Right ventricle myocardium inferior (tissue), 1 donor: ENCODE measurements at regions of chr10 and their contacts with region 1.

Region 1: DNA sequence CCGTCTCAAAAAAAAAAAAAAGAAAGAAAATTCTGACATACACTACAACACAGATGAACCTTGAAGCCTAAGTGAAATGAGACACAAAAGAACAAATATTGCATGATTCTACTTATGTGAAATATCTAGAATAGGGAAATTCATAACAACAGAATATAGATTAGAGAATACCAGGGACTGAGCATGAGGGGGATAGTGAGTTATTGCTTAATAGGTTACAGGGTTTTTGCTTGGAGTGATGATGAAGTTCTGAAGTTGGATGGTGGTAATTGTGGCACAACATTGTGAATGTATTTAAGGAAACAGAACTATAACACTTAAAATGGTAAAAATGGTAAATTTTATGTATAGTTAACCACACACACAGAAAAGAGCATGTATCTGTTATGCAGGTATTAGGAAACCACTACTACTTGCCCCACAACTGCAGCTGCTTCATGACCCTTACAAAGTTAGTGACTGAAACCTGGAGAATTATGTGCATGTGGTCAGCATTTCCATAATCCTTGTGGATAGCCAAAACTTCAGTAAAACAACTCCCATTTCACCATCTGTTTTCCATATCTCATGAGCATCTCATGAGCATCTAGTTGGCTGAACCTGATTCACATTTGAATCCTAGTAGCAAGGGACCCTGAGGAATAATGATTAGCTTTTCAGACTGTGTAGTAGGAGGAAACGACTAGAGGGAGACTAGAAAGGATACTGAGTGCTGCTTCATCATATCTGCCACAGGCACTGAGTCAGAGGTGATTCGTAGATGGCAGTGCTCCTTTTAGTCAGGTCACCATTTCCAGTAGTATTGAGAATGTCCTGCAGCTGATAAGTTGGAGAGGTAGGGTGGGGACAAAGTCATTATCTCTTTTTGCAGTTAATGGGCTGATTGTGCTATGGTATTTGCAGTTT is 26.3 kb downstream of the SAMD8 start:
- DNase-seq: no peak
- ATAC-seq: peak; percentile 44

Region 2: DNA sequence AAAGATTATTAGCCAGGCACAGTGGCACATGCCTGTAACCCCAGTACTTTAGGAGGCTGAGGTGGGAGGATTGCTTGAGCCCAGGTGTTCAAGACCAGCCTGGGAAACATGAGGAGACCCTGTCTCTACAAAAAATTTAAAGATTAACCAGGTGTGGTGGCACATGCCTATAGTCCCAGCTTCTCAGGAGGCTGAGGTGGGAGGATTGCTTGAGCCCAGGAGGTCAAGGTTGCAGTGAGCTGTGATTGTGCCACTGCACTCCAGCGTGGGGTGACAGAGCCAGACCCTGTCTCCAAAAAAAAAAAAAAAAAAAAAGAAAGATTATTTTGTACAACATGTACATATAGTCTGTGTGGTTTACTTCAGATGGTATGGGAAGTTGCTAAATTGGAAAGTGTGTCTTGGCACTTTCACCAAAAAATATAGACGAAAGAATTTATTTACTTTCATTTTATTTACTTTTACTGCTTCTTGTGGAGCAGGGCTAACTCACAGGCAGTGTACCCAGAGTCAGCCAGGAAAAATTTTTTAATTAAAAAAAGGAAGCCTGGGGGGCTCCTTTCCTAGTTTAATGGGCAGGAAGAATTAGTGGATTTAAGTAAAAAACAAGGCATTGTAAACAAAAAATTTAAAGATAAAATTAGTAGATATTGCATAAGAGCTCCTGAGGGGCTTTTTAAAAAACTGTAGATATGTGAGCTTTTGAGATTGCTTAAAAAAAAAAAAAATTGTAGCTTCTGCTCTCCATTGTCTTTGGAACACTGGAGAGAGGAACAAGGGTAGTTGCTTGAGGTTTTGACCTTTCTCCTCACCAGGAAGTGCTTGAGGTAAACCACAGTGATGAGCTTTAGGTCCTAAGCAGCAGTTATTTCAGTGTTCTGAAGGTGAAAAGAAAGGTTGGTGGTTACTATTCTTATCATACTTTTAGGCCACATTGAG is 28.2 kb after region 1 on chr10:
- intact Hi-C with region 1: loop called (anchors 5 kb)
- DNase-seq: no peak
- ATAC-seq: no peak